ENCODE measurements at regions of chr20 and their contacts with region 1.

Region 1: GRCh38 chr20:57596998-57597939 is 23.0 kb downstream of the ZBP1 start:
- DNase-seq: peak; percentile 87
- ATAC-seq: peak; percentile 89

Region 2: DNA sequence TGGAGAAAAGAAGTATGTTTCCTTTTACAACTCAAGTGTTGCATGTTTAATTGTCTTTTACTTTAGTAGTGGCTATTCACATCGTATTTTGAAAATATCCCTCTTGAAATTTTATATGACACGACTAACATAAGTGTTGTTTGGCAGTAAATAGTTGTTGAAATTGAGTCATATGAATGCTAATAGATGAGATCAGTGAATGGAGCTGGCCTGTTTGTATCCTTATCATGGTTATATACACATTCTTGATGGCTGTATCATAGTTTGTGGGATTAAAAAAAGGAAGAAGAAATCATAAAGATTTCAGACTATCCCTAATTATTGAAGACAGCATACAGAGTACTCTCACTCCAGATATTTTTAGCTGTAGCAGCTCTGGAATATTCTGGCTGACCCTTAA is 254.4 kb before region 1 on chr20:
- intact Hi-C with region 1: no loop called
- DNase-seq: no peak
- ATAC-seq: no peak

Region 3: GRCh38 chr20:57374931-57375651 is 222.2 kb before region 1 on chr20:
- intact Hi-C with region 1: loop called (anchors 5 kb)
- DNase-seq: peak; percentile 70
- ATAC-seq: peak; percentile 78

Region 4: GRCh38 chr20:57391074-57391554 is 206.2 kb before region 1 on chr20 and contains the start of gene RBM38:
- intact Hi-C with region 1: no loop called
- DNase-seq: peak; percentile 83
- ATAC-seq: peak; percentile 80
- total RNA-seq, gene RBM38: 91.5 TPM

Region 5: DNA sequence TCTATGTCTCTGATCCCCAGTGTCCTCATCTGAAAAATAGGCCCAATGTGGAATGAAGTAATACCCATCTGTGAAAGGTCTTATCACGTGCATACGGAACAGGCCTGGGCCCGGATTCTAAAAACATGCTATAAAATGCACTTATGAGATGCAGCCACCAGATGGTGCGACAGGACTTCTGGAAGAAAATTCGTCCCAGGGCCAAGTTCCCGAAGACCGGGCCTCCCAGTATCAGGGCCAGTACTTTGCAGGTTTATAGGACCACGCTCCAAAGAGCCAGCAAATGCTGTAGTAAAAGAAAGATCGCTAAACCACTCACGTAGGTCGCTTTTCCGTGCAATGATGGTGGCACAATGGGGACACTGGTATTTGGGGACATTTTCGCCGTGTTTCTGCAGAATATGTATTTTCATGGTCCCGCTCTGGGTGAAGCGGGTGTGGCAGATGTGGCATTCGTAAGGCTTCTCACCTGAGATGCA is 83.0 kb before region 1 on chr20:
- intact Hi-C with region 1: loop called (anchors 2 kb)
- DNase-seq: peak; percentile 67
- ATAC-seq: peak; percentile 93

Region 6: DNA sequence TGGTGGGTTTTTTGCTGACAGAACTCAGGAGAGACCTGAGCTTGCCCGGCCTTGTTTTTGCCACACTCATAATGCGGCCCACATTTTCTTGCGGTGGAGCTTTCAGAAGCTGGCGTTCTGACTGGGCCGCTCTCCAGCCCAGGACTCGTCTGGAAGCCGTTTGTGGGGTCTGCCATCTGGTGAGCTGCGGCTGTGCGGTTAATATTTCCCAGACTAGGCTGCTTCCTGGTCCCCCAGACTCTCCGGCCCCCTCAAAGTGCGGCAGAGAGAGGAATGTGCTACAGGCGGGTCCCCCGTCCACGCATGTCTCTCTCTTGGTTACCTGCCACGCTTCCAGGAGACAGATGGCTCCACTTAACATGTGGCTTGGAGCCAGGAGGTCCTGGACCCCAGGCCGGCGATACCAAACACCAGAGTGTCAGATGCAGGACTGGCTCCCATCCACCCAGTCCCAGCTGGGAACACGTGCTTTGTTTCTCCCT is 241.4 kb after region 1 on chr20:
- intact Hi-C with region 1: no loop called
- DNase-seq: no peak
- ATAC-seq: peak; percentile 14

Region 7: GRCh38 chr20:58209652-58210397 is 612.6 kb after region 1 on chr20:
- intact Hi-C with region 1: loop called (anchors 1 kb)
- DNase-seq: peak; percentile 92
- ATAC-seq: peak; percentile 96

Measured in Right ventricle myocardium superior (tissue), 1 donor.